Caco-2 (cell line): ENCODE measurements at regions of chr17 and their contacts with region 1.

Region 1: DNA sequence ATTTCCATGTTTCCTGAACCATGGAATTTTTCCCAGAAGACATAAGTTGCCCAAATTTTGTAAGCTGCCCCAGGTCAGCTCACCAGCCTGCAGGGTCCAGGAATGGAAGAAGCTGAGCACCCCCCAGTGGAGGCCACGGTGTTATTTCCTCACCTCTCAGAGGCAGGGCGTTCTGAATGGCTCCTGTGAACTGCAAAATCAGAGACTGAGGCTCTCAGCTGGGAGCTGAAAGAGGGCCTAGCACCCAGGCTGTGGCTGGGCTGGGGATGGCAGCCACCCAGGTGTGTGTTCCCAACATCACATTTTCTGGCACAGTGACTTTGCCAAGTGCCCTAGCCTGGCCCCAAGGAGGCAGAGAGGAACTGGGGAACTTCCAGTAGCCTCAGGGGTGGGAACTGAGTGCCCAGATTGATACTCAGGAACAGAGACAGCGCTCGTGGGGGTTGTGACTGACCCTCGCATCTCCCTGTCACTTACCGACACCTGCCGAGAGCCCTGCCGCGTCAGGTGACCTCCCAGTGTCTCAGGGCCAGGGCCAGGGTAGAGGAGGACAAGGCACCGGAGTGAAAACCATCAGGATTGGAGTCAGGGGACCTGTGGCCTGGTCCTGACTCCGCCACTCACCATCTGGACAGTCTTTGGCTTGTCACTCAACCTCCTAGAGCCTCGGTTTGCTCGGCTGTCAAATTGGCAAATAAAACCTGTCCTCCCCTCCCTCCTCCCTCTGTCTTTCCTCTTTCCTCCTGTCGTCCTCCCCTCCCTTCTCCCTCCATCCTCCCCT is 11.3 kb downstream of the CACNG4 start:
- DNase-seq: peak; percentile 68 to 74
- H3K4me3 ChIP-seq: no peak overlapping the region
- H3K4me3 Mint-ChIP-seq: no peak overlapping the region
- H3K27ac Mint-ChIP-seq: no peak overlapping the region
- H3K4me1 ChIP-seq: peaks cover 26% of the 10 kb centered on the region
- H3K4me1 Mint-ChIP-seq: peaks cover 13% of the 10 kb centered on the region
- H3K27me3 ChIP-seq: no peaks in the 10 kb centered on the region
- H3K27me3 Mint-ChIP-seq: no peaks in the 10 kb centered on the region
- CTCF ChIP-seq: peak; percentile 42 to 63

Region 2: DNA sequence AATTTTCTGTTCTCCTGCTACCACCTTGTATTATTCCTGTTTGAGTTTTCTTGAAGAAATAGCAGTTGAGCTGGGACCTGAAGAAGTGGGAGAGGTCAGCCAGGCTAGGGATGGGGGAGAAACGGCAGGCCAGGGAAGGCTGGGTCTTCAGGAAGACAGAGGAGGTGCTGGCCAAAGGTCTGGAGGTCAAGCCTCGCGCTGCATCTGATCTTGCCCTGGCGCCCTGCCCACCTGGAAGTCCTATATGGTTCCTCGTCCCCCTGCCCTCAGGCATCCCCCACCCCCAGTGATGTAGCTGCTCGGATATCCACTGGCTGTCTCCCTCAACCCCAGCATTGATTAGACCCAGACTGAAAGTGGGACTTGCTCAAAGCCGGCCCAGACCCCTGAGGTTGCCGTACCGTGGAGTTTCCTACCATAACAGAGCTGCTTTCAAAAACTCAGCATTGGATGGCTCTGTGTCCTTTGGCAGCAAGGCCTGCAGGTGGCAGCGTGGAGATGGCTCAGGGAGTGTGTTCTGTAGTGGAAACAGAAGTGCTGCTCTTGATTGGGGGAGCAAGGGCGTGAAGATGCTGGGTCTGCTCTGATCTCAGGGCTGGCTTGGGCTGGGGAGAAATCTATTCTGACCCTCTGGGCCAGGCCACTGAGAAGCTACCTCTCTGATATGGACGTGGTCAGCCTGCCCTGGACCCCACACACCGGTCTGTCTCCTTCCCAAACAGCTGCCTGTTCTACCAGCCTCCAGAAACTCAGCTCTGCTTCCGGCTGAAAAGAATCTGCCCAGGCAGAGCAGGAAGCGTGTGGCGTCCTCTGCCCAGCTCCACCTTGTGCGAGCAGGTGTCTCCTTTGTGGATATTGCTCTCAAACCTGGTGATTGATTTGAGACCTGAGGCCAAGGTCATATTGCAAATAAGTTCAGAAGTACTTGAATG is 247.9 kb before region 1 on chr17:
- CTCF ChIA-PET with region 1: interaction called, 14 read pairs
- POLR2A ChIA-PET with region 1: no interaction called
- intact Hi-C with region 1: no loop called
- DNase-seq: peak; percentile 62 to 69
- H3K4me3 ChIP-seq: no peak overlapping the region
- H3K4me3 Mint-ChIP-seq: no peak overlapping the region
- H3K27ac Mint-ChIP-seq: no peak overlapping the region
- H3K4me1 ChIP-seq: no peaks in the 10 kb centered on the region
- H3K4me1 Mint-ChIP-seq: no peaks in the 10 kb centered on the region
- H3K27me3 ChIP-seq: no peaks in the 10 kb centered on the region
- H3K27me3 Mint-ChIP-seq: no peaks in the 10 kb centered on the region
- CTCF ChIP-seq: peak; percentile 60 to 90

Region 3: DNA sequence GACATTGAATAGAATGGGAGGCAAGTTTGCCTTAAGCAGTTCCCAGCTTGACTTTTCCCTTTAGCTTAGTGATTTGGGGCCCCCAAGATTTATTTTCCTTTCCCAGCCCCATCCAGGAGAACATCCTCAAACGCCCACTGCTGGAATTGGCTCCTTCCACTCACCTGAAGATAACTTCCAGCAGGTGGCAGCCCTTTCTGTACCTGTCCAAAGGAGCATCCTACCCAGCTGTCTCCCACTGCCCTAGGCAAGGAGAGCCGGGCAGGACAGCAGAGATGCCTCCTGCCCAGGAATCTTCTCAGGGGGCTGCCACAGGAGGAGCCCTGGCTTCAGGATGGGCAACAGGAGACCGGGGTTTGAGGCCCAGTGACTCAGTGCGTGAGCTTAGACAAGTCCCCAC is 134.5 kb before region 1 on chr17:
- CTCF ChIA-PET with region 1: interaction called, 7 read pairs
- POLR2A ChIA-PET with region 1: no interaction called
- intact Hi-C with region 1: loop called (anchors 1 kb)
- DNase-seq: peak; percentile 45 to 52
- H3K4me3 ChIP-seq: no peak overlapping the region
- H3K4me3 Mint-ChIP-seq: no peak overlapping the region
- H3K27ac Mint-ChIP-seq: no peak overlapping the region
- H3K4me1 ChIP-seq: no peaks in the 10 kb centered on the region
- H3K4me1 Mint-ChIP-seq: no peaks in the 10 kb centered on the region
- H3K27me3 ChIP-seq: no peaks in the 10 kb centered on the region
- H3K27me3 Mint-ChIP-seq: peaks cover 14% of the 10 kb centered on the region
- CTCF ChIP-seq: peak; percentile 47

Region 4: DNA sequence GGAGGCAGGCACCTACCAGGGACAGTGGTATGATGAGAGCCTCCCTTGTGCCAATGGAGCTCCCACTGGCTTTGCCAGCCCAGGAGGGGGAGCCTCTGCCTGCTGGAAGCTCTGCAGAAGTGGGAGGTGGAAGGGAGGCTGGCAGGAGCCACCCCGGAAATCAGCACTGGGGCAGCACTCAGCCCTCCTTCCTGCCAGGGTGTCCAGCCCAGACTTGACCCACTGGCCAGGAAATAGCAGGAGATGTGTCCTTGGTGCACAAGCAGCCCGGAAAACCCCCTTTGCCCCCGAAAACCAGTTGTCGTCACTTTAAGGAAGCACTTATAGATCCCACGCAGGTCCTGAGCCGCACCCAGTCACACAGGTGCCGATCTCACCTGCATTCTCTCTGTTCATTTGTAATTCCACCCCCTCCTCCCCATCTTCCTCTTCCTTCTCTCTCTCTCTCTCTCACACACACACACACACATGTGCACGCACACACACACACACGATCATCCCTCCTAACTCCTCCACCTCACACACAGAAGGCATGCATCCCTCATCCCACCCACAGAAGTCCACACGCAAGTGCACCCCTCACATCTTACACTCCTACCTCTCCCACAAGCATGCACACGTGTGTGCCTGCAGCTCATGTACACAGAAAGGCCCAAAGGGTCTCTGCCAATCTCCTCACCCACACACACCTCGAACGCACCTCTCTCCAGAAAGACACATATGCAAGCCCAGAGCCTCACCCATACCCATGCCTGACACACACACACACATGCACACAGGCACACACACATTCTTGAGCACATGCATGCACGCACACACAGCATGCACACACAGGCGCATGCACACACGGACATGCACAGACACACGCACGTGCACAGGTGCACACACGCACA is 60.3 kb before region 1 on chr17:
- CTCF ChIA-PET with region 1: interaction called, 15 read pairs
- POLR2A ChIA-PET with region 1: no interaction called
- intact Hi-C with region 1: loop called (anchors 1 kb)
- DNase-seq: peak in 1 of 2 experiments; percentile 58
- H3K4me3 ChIP-seq: no peak overlapping the region
- H3K4me3 Mint-ChIP-seq: no peak overlapping the region
- H3K27ac Mint-ChIP-seq: no peak overlapping the region
- H3K4me1 ChIP-seq: no peaks in the 10 kb centered on the region
- H3K4me1 Mint-ChIP-seq: peaks cover 8% of the 10 kb centered on the region
- H3K27me3 ChIP-seq: no peaks in the 10 kb centered on the region
- H3K27me3 Mint-ChIP-seq: no peaks in the 10 kb centered on the region
- CTCF ChIP-seq: peak; percentile 25 to 66

Region 5: GRCh38 chr17:66934009-66934408 is 41.8 kb before region 1 on chr17:
- CTCF ChIA-PET with region 1: no interaction called
- POLR2A ChIA-PET with region 1: no interaction called
- intact Hi-C with region 1: no loop called
- DNase-seq: no peak
- H3K4me3 ChIP-seq: no peak overlapping the region
- H3K4me3 Mint-ChIP-seq: no peak overlapping the region
- H3K27ac Mint-ChIP-seq: no peak overlapping the region
- H3K4me1 ChIP-seq: peaks cover 7% of the 10 kb centered on the region
- H3K4me1 Mint-ChIP-seq: peaks cover 7% of the 10 kb centered on the region
- H3K27me3 ChIP-seq: no peaks in the 10 kb centered on the region
- H3K27me3 Mint-ChIP-seq: no peaks in the 10 kb centered on the region
- CTCF ChIP-seq: no peak